GM10248 (cell line): ENCODE measurements at regions of chr6 and their contacts with region 1.

Region 1: DNA sequence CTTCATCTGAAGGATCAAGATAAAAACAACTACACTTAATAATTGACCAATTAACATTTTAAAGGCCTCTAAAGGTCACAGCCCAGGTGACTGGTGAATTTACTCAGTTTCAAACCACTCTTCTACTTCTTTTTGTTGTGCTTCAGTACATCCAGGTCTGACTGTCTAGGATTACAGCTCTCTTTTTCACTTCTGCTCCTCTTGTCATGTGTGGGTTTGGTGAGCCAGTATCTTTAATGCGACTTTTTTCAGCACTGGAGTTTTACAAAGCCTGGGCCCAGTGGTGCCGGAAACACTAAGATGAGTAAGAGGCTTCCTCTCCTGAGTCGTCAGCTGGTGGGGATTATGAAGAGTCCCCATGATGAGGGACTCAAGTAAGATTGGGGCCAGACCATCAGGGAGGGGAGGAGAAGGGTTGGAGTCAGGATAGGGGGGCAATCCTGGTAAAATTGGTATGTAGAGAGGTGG is 27.0 kb downstream of the HECA start:
- DNase-seq: peak; percentile 83
- CTCF ChIP-seq: no peak

Region 2: GRCh38 chr6:139173172-139173571 is 11.3 kb after region 1 on chr6:
- CTCF ChIA-PET with region 1: interaction called, 11 read pairs
- POLR2A ChIA-PET with region 1: no interaction called
- DNase-seq: no peak
- CTCF ChIP-seq: no peak